ENCODE measurements at regions of chr2 and their contacts with region 1.

Region 1: DNA sequence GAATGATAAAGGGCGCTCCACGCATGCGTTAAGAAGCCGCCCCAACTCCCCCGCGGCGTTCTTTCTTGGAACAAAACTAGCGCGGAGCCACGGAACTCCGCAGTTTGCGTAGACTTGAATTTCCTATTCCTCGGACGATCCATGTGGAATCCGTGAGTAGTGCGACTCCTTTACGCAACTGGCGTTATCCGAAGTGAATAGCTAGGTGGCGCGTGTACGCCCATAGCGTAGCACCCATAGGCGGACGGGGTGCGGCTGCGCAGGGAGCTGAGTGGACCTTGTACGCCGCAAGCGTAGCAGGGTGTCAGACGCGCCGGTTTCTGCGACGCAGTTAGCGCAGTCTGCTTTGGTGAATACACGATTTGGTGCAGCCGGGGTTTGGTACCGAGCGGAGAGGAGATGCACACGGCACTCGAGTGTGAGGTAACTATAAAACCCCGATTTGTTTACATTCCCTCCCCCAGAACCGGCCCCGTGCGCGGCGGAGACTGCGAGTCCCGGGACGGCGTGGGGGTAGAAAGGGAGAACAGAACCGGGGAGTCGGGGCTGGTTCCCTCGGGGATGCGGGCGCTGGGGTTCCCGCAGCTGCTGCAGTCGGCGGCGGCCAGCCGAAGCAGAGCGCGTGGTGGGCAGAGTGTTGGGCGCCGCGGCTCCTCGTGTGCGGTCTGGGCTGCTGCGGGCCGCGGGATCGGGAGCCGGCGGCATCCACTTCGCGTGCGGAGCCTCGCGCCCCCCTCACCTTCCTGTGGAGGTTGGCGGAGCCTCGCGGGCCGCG is at the start of gene SLC39A10:
- DNase-seq: peak; percentile 99
- ATAC-seq: peak; percentile 79
- H3K4me3 ChIP-seq: peak within 1 kb of the TSS; percentile 88
- H3K27ac ChIP-seq: peak within 1 kb of the TSS; percentile 78
- H3K4me1 ChIP-seq: peaks cover 25% of the 10 kb centered on the region
- H3K27me3 ChIP-seq: no peaks in the 10 kb centered on the region
- CTCF ChIP-seq: no peak
- total RNA-seq, gene SLC39A10: 18.6 and 19.9 TPM in 2 replicates

Region 2: GRCh38 chr2:194698012-194698411 is 959.0 kb before region 1 on chr2:
- CTCF ChIA-PET with region 1: no interaction called
- POLR2A ChIA-PET with region 1: no interaction called
- intact Hi-C with region 1: loop called (anchors 5 kb)
- DNase-seq: peak; percentile 2
- ATAC-seq: peak; percentile 23
- H3K4me3 ChIP-seq: no peak overlapping the region
- H3K27ac ChIP-seq: peak overlapping the region; percentile 69
- H3K4me1 ChIP-seq: peaks cover 37% of the 10 kb centered on the region
- H3K27me3 ChIP-seq: no peaks in the 10 kb centered on the region
- CTCF ChIP-seq: no peak

Region 3: GRCh38 chr2:195364015-195364965 is 292.8 kb before region 1 on chr2:
- CTCF ChIA-PET with region 1: no interaction called
- POLR2A ChIA-PET with region 1: no interaction called
- intact Hi-C with region 1: loop called (anchors 2 kb)
- DNase-seq: peak; percentile 86
- ATAC-seq: peak; percentile 91
- H3K4me3 ChIP-seq: peak overlapping the region; percentile 36
- H3K27ac ChIP-seq: peak overlapping the region; percentile 86
- H3K4me1 ChIP-seq: peaks cover 25% of the 10 kb centered on the region
- H3K27me3 ChIP-seq: no peaks in the 10 kb centered on the region
- CTCF ChIP-seq: no peak

Region 4: DNA sequence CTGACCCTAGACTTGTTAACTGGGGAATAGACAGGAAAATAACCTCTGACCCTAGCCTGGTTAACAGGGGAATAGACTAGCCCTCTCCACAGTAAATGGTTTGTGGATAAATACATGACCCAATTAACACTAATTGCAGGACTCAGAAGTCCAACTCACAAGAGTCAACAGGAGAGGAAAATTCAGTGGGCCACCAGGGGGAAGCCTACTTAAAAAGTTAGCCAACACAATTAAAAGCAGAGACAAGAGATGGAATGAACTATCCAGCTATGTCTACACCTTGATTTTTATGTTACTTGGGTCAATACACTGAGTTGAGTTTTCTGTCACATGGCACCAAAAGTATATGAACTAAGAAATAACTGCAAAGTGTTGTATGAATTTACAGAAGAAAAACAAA is 158.9 kb before region 1 on chr2:
- CTCF ChIA-PET with region 1: interaction called, 9 read pairs
- POLR2A ChIA-PET with region 1: no interaction called
- intact Hi-C with region 1: loop called (anchors 1 kb)
- DNase-seq: peak; percentile 59
- ATAC-seq: peak; percentile 37; the same call in 1 of the 2 replicates
- H3K4me3 ChIP-seq: no peak overlapping the region
- H3K27ac ChIP-seq: no peak overlapping the region
- H3K4me1 ChIP-seq: 0 out of 2 replicates have a peak, but pooled peaks cover 7% of the 10 kb centered on the region
- H3K27me3 ChIP-seq: no peaks in the 10 kb centered on the region
- CTCF ChIP-seq: peak; percentile 72

Region 5: GRCh38 chr2:195543902-195544894 is 112.8 kb before region 1 on chr2:
- CTCF ChIA-PET with region 1: interaction called, 5 read pairs
- POLR2A ChIA-PET with region 1: interaction called, 5 read pairs
- intact Hi-C with region 1: loop called (anchors 1 kb)
- DNase-seq: peak; percentile 91
- ATAC-seq: peak; percentile 100
- H3K4me3 ChIP-seq: peak overlapping the region; percentile 21; the same call in 1 of the 2 replicates
- H3K27ac ChIP-seq: peak overlapping the region; percentile 81
- H3K4me1 ChIP-seq: peaks cover 10% of the 10 kb centered on the region
- H3K27me3 ChIP-seq: no peaks in the 10 kb centered on the region
- CTCF ChIP-seq: no peak

Region 6: GRCh38 chr2:195575879-195576401 is 81.1 kb before region 1 on chr2:
- CTCF ChIA-PET with region 1: interaction called, 7 read pairs
- POLR2A ChIA-PET with region 1: no interaction called
- intact Hi-C with region 1: loop called (anchors 1 kb)
- DNase-seq: peak; percentile 94
- ATAC-seq: peak; percentile 87
- H3K4me3 ChIP-seq: no peak overlapping the region; the same call in 1 of the 2 replicates
- H3K27ac ChIP-seq: peak overlapping the region; percentile 45
- H3K4me1 ChIP-seq: peaks cover 13% of the 10 kb centered on the region
- H3K27me3 ChIP-seq: no peaks in the 10 kb centered on the region
- CTCF ChIP-seq: peak; percentile 59

Region 7: GRCh38 chr2:195737173-195738043 is 80.4 kb after region 1 on chr2:
- CTCF ChIA-PET with region 1: no interaction called
- POLR2A ChIA-PET with region 1: no interaction called
- intact Hi-C with region 1: no loop called
- DNase-seq: peak; percentile 88
- ATAC-seq: peak; percentile 79
- H3K4me3 ChIP-seq: peak overlapping the region; percentile 13; the same call in 1 of the 2 replicates
- H3K27ac ChIP-seq: peak overlapping the region; percentile 84
- H3K4me1 ChIP-seq: peaks cover 42% of the 10 kb centered on the region
- H3K27me3 ChIP-seq: no peaks in the 10 kb centered on the region
- CTCF ChIP-seq: no peak

Measured in PC-3 (cell line).